ENCODE measurements at regions of chr18 and their contacts with region 1.

Region 1: DNA sequence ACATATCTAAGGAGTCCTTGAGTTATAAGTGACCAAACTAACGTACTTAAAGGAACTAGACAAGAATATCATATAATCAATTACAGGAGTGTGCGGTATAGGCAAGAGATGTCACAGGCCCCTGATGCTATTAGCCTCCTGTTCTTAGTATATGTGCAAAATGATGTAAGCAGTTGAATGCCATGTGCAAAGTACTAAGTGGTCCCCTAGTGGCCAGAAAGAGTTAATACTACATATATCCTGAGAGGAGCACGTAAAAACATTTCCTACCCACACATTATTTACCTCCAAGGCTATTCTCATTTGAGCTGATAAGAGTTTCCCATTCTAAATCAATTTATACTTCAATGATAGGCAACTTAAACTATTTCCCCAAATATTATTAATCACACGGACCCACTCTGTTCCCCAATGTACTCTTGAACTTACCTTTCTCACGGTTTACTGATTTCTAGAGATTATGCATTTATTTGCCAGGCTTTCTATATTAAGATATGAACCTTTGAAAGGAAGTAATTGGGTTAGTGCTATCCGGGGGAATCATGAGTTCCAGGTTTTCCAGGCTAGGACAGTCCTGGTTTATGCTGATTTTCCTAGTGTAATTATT is 158.0 kb upstream of the KLHL14 start:
- DNase-seq: no peak
- ATAC-seq: peak; percentile 97
- H3K4me3 ChIP-seq: no peak overlapping the region
- H3K27ac ChIP-seq: no peak overlapping the region
- H3K4me1 ChIP-seq: no peaks in the 10 kb centered on the region
- H3K27me3 ChIP-seq: no peaks in the 10 kb centered on the region
- CTCF ChIP-seq: peak; percentile 55 to 74 (median 70); a peak in 5 of 6 replicates
- EP300 ChIP-seq: no peak
- POLR2A ChIP-seq: no peak
- RAD21 ChIP-seq: peak; percentile 71

Region 2: GRCh38 chr18:32158108-32158624 is 772.6 kb before region 1 on chr18:
- CTCF ChIA-PET with region 1: interaction called, 3 read pairs
- POLR2A ChIA-PET with region 1: no interaction called
- RAD21 ChIA-PET with region 1: no interaction called
- SMC1A ChIA-PET with region 1: no interaction called
- in situ Hi-C with region 1: no loop called
- intact Hi-C with region 1: loop called (anchors 10 kb)
- DNase-seq: peak; percentile 20
- ATAC-seq: peak; percentile 98
- H3K4me3 ChIP-seq: no peak overlapping the region
- H3K27ac ChIP-seq: no peak overlapping the region
- H3K4me1 ChIP-seq: no peaks in the 10 kb centered on the region; the same call in 1 of the 2 replicates
- H3K27me3 ChIP-seq: no peaks in the 10 kb centered on the region
- CTCF ChIP-seq: peak; percentile 83 to 91 (median 85)
- EP300 ChIP-seq: no peak
- POLR2A ChIP-seq: no peak
- RAD21 ChIP-seq: peak; percentile 89

Region 3: GRCh38 chr18:32595832-32596231 is 335.0 kb before region 1 on chr18:
- CTCF ChIA-PET with region 1: no interaction called
- POLR2A ChIA-PET with region 1: no interaction called
- RAD21 ChIA-PET with region 1: no interaction called
- SMC1A ChIA-PET with region 1: no interaction called
- in situ Hi-C with region 1: no loop called
- intact Hi-C with region 1: loop called (anchors 10 kb)
- DNase-seq: no peak
- ATAC-seq: no peak
- H3K4me3 ChIP-seq: no peak overlapping the region
- H3K27ac ChIP-seq: no peak overlapping the region
- H3K4me1 ChIP-seq: no peaks in the 10 kb centered on the region
- H3K27me3 ChIP-seq: no peaks in the 10 kb centered on the region
- CTCF ChIP-seq: no peak
- EP300 ChIP-seq: no peak
- POLR2A ChIP-seq: no peak
- RAD21 ChIP-seq: no peak

Region 4: DNA sequence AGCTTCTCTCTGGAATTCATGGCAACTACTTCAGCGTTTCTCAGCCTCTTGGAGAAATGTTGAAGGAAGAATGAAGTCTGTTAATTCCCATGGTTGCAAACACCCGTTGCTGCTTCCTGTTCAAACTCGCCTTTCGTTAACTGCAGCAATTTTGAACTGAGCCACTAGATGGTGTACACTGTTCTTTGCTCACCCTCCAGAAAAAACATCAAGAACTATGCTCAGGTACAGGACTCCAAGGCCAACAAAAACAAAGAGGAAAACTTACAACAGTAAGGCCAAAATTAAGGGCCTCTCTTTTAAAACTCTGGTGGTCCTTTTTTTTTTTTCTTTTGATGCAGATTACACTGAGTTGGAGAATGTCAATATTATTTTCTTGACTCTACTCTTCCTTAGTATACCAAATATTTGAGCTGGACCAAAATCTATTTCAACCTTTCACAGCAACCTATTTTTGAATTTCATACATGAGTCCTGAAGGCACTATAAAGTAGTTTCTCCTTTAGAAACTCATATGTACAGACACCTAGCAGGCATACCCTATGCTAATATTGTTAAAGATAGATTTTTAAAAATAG is 216.1 kb before region 1 on chr18:
- CTCF ChIA-PET with region 1: interaction called, 9 read pairs
- POLR2A ChIA-PET with region 1: no interaction called
- RAD21 ChIA-PET with region 1: interaction called, 5 read pairs
- SMC1A ChIA-PET with region 1: interaction called, 8 read pairs
- in situ Hi-C with region 1: loop called (anchors 25 kb)
- intact Hi-C with region 1: loop called (anchors 1 kb)
- DNase-seq: peak; percentile 12
- ATAC-seq: peak; percentile 91
- H3K4me3 ChIP-seq: no peak overlapping the region
- H3K27ac ChIP-seq: no peak overlapping the region
- H3K4me1 ChIP-seq: no peaks in the 10 kb centered on the region
- H3K27me3 ChIP-seq: no peaks in the 10 kb centered on the region
- CTCF ChIP-seq: peak; percentile 86 to 88 (median 87)
- EP300 ChIP-seq: no peak
- POLR2A ChIP-seq: no peak
- RAD21 ChIP-seq: peak; percentile 92